Sigmoid colon (tissue), 7 donors: ENCODE measurements at regions of chr1 and their contacts with region 1.

Region 1: DNA sequence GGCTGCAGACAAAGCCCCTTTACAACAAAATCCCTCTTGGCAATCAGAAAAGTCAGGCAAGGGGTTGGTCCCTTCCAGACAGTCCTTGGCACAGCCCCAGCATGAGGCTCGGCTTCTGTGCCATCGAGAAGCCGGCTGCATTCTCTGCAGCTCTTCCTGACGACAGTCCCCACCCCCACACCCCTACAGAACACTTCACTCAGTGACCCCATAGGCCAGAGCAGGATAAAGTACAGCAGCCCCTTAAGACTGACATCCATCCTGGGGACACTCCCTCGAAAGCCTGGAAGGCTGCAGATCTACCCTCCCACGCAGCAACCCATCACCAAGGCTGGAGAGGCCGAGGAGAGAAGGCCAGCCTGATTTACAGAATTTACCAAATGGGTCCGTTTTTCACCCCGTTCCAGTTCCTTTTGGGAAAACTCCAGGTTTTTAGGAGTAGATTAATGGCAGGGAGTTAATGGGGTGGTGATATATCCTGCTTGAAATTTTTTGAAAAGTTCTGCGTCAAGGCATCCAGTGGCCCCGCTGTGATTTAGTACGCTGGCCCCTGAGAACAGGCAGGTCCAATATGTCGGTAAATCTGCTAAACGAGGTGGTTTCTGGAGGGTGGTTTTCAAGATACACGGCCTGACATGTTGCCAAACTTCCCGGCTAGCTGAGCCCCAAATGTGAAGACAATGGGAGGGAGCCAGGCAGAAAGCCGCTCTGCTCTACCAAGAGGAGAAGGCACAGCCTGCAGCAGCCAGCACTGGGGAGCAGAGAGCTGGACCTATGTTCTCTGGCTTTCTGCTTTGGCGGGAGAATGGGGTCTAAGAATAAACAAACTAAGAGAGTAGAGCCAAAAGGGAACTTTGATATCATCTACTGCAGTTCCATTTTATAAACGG is 81.7 kb downstream of the SSBP3 start:
- DNase-seq: peak; percentile 87
- H3K4me3 ChIP-seq: no peak overlapping the region
- H3K27ac ChIP-seq: peak overlapping the region; percentile 74 to 83 (median 80)
- H3K4me1 ChIP-seq: peaks cover 0 to 76% (median 71%) of the 10 kb centered on the region in 4 donors
- H3K27me3 ChIP-seq: no peaks in the 10 kb centered on the region
- CTCF ChIP-seq: no peak
- EP300 ChIP-seq: no peak
- POLR2A ChIP-seq: no peak

Region 2: DNA sequence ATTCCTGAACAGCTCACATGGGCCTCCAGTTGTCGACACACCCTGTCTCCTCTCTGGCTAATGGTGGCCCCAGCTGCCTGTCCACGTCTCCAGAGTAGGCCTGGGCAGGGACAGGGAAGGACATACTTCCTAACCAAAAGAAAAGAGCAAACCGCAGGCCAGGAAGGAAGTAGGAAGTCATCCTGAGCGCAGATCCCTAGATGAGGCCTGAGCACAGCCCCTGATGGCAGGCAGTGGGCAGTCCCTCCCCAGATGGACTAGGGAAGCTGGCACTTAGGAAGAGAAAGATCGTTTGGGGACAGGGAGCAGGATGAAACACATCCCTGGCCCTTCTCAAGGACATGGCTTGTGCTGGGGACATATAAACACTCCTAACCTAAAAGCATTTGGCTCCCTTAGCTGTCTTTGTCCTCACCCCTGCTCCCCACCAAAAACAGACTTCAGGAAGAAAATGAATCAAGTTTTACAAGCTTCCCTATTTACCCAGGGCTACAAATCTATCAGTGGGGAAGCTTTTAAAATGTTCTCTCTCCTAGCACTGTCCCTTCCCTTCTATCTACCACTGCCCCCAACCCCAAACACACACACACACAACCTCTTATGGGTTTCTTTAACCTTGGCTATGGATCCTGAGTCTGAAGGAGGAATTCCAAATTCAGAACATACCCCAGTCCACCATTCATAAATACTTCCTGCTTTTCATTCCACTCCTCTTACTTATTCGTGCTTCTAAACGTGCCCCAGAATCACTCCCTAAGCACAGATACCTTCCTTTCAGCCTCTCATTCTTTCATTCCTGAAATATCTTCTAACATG is 60.6 kb after region 1 on chr1:
- intact Hi-C with region 1: loop called (anchors 5 kb)
- DNase-seq: no peak
- H3K4me3 ChIP-seq: no peak overlapping the region
- H3K27ac ChIP-seq: peak overlapping the region; percentile 73 to 85 (median 78)
- H3K4me1 ChIP-seq: peaks cover 0 to 62% (median 53%) of the 10 kb centered on the region in 4 donors
- H3K27me3 ChIP-seq: no peaks in the 10 kb centered on the region
- CTCF ChIP-seq: no peak
- EP300 ChIP-seq: peak in 3 of 4 donors; percentile 11 to 56 (median 52)
- POLR2A ChIP-seq: no peak

Region 3: DNA sequence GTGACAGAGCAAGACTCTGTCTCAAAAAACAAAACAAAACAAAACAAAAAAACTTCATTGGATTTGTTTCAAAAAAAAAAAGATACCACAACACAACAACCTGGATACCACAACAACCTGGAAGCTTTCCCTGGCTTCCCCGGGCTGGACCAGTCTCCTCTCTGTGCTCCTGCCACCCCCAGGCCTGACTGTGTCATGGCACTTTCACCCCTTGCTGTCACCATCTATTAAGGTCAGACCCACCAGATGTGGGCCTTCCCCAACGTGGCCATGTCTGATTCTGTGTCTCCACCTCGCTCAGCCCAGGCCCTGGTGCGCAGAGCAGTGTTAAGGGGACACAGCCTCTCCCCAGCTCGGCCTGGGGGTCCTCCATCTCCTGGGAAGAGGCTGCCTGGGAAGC is 195.2 kb after region 1 on chr1:
- intact Hi-C with region 1: no loop called
- DNase-seq: no peak
- H3K4me3 ChIP-seq: no peak overlapping the region
- H3K27ac ChIP-seq: no peak overlapping the region
- H3K4me1 ChIP-seq: no peaks in the 10 kb centered on the region
- H3K27me3 ChIP-seq: no peaks in the 10 kb centered on the region
- CTCF ChIP-seq: no peak
- EP300 ChIP-seq: no peak
- POLR2A ChIP-seq: no peak